ENCODE measurements at regions of chr14 and their contacts with region 1.

Region 1: DNA sequence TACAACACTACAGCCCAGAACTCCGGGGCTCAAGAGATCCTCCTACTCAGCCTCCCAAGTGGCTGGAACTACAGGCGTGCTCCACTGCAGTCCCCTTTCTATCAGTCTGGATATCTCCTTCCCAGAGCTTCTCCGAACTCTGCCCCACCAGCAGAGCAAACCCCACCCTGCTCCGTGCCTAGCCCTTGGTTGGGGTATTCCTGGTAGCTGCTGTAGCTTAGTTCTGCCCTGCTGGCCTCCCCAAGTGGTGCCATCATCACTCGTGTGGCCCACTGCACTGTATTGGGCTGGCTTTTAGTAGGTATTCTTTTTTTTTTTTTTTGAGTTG is 9.5 kb downstream of the HSP90AA1 start:
- DNase-seq: no peak
- ATAC-seq: no peak

Region 2: GRCh38 chr14:102088012-102088792 is 10.9 kb after region 1 on chr14:
- intact Hi-C with region 1: no loop called
- DNase-seq: peak; percentile 81
- ATAC-seq: peak; percentile 69

Region 3: GRCh38 chr14:103225476-103225875 is 1148.1 kb after region 1 on chr14:
- intact Hi-C with region 1: loop called (anchors 5 kb)
- DNase-seq: no peak
- ATAC-seq: peak; percentile 84